ENCODE measurements at regions of chr16 and their contacts with region 1.

Region 1: GRCh38 chr16:2009789-2010510 is at the start of gene ZNF598:
- DNase-seq: peak; percentile 90 to 95 (median 90)
- ATAC-seq: peak; percentile 91
- H3K4me3 ChIP-seq: peak within 1 kb of the TSS; percentile 99
- H3K27ac ChIP-seq: peak within 1 kb of the TSS; percentile 91
- H3K4me1 ChIP-seq: peaks cover 20 to 60% of the 10 kb centered on the region in 2 experiments
- H3K27me3 ChIP-seq: no peaks in the 10 kb centered on the region
- CTCF ChIP-seq: no peak; a peak in 1 of 6 replicates
- EP300 ChIP-seq: peak; percentile 27; the same call in 1 of the 2 replicates
- POLR2A ChIP-seq: peak; percentile 96
- RAD21 ChIP-seq: no peak
- polyA plus RNA-seq, gene ZNF598: 0.11 to 0.39 TPM

Region 2: DNA sequence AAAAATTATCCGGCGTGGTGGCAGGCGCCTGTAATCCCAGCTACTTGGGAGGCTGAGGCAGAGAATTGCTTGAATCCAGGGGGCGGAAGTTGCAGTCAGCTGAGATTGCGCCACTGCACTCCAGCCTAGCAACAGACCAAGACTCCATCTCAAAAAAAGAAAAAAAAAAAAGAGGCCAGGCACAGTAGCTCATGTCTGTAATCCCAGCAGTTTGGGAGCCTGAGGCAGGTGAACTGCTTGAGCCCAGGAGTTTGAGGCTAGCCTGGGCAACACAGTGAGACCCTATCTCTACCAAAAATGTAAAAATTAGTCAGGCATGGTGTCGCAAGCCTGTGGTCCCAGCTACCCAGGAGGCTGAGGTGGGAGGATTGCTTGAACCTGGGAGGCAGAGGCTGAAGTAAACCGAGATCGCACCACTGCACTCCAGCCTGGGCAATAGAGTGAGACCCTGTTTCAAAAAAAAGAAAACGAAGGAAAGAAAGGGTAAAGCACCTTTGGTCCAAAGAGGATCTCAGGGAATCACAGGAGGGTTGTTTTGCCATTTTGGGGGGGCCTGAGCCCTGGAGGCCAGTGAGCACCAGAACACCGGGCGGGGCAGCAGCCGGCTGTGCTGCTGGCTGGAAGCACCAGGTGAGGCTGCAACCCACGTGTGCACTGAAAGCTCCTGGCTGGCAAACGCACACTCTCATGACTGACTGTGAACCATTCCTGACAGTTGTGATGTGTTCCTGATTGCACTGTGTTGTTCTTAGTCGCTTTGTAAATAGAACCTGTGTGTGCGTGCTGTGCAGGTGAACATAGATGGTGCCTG is 110.1 kb before region 1 on chr16:
- CTCF ChIA-PET with region 1: no interaction called
- POLR2A ChIA-PET with region 1: no interaction called
- in situ Hi-C with region 1: no loop called
- intact Hi-C with region 1: no loop called
- DNase-seq: no peak
- ATAC-seq: no peak
- H3K4me3 ChIP-seq: no peak overlapping the region
- H3K27ac ChIP-seq: no peak overlapping the region
- H3K4me1 ChIP-seq: peaks cover 0 to 23% of the 10 kb centered on the region in 2 experiments; a peak in 2 of 5 replicates
- H3K27me3 ChIP-seq: peaks cover 50 to 72% of the 10 kb centered on the region in 2 experiments
- CTCF ChIP-seq: no peak
- EP300 ChIP-seq: no peak
- POLR2A ChIP-seq: no peak
- RAD21 ChIP-seq: no peak

Region 3: GRCh38 chr16:1991948-1992703 is 17.8 kb before region 1 on chr16:
- CTCF ChIA-PET with region 1: no interaction called
- POLR2A ChIA-PET with region 1: interaction called, 13 read pairs
- in situ Hi-C with region 1: no loop called
- intact Hi-C with region 1: loop called (anchors 2 kb)
- DNase-seq: peak; percentile 97 to 99 (median 97)
- ATAC-seq: peak; percentile 82
- H3K4me3 ChIP-seq: peak overlapping the region; percentile 64
- H3K27ac ChIP-seq: peak overlapping the region; percentile 94
- H3K4me1 ChIP-seq: peaks cover 29 to 56% of the 10 kb centered on the region in 2 experiments
- H3K27me3 ChIP-seq: no peaks in the 10 kb centered on the region
- CTCF ChIP-seq: no peak
- EP300 ChIP-seq: no peak
- POLR2A ChIP-seq: peak; percentile 73
- RAD21 ChIP-seq: no peak

Region 4: GRCh38 chr16:1997494-1998353 is 12.2 kb before region 1 on chr16:
- CTCF ChIA-PET with region 1: no interaction called
- POLR2A ChIA-PET with region 1: interaction called, 13 read pairs
- in situ Hi-C with region 1: no loop called
- intact Hi-C with region 1: loop called (anchors 2 kb)
- DNase-seq: no peak
- ATAC-seq: no peak
- H3K4me3 ChIP-seq: no peak overlapping the region
- H3K27ac ChIP-seq: no peak overlapping the region
- H3K4me1 ChIP-seq: peaks cover 12 to 51% of the 10 kb centered on the region in 2 experiments
- H3K27me3 ChIP-seq: no peaks in the 10 kb centered on the region
- CTCF ChIP-seq: no peak
- EP300 ChIP-seq: no peak
- POLR2A ChIP-seq: no peak
- RAD21 ChIP-seq: no peak